Endothelial cell of umbilical vein (primary cell): ENCODE measurements at regions of chr7 and their contacts with region 1.

Region 1: DNA sequence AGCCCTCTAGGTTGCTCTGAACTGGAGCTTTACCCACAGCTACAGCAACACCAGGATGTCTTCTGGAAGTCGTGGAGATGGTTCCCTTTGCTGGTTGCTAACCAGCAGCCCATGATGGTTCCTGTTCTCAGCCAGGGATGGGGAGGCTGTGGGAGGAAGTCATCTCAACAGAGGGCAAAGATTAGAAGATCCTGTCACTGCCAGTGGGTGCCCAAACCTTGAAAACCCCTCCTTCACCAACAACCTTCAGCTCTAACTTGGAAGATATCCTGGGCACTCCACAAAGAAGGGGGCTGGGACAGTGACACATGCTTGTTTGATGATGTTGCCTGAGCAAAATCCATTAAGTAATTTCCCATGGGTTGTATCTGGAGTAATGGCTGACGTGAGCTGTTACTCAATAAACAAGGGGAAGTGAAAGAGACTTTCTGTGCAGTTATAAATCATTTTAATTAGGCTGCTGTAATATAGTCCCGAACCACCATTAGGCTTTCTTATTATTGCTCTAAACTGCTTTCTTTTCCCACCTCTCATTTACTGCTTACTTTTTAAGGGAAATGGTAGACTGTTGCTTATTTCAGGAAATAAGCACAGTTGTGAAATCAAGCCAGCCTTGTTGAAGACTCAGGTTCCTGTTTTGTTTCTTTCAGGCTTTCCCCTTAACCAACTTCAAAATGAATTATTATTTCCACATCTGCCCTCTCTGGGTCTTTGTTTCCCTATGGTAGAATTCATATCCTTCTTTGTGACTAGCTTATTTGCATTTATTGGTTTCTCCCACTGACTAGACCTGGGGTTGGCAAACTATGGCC is 124.8 kb downstream of the PPP1R17 start:
- DNase-seq: peak; percentile 56
- H3K4me3 ChIP-seq: no peak overlapping the region
- H3K27ac ChIP-seq: no peak overlapping the region
- H3K4me1 ChIP-seq: peaks cover 26% of the 10 kb centered on the region
- H3K27me3 ChIP-seq: no peaks in the 10 kb centered on the region
- CTCF ChIP-seq: no peak
- POLR2A ChIP-seq: no peak

Region 2: DNA sequence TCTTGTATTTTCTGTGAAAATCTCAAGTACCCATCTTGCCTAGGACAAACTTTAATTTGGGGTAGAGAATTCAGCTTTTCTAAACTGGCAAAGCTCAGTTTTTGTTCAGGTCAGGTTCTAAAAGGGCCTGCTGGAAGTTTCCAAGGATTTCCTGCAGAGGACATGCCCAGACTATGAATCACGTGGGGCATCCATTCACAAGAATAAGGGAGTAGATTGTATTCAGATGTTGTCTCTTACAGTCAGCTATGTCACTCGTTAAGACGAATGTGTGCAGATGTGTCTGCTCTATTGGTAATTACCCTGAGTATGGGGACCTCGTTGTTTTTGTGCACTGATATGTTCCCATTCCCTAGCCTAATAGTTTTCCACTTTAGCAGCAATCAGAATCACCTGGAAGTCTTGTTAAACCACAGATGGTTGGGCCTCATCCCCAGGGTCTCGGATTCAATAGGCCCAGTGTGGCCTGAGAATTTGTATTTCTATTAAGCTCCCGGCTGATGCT is 379.0 kb before region 1 on chr7:
- CTCF ChIA-PET with region 1: no interaction called
- POLR2A ChIA-PET with region 1: no interaction called
- dilution Hi-C with region 1: no loop called
- intact Hi-C with region 1: no loop called
- DNase-seq: peak; percentile 2
- H3K4me3 ChIP-seq: no peak overlapping the region
- H3K27ac ChIP-seq: no peak overlapping the region
- H3K4me1 ChIP-seq: no peaks in the 10 kb centered on the region
- H3K27me3 ChIP-seq: no peaks in the 10 kb centered on the region
- CTCF ChIP-seq: no peak
- POLR2A ChIP-seq: no peak

Region 3: DNA sequence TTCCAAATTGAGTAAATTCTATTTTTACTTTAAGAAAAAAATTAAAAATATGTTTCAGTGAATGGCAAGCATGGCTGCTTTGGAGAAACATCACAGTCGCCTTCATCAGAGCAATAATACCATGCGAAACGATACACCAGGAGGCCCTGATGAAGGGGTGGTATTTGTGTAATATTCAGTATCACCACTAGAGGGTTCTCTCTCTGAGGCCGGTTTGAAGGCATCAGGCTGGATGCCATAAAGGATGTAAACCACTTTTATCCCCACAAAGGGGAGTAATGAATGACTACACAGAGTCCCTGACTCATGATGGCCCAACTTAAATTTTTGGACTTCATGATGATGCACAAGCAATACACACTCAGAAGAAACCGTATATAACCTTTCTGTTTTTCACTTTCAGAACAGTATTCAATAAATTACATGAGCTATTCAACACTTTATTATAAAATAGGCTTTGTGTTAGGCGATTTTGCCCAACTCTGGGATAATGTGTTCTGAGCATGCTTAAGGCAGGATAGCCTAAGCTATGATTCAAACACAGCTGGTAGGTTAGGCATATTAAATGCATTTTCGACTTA is 29.4 kb before region 1 on chr7:
- CTCF ChIA-PET with region 1: interaction called, 12 read pairs
- POLR2A ChIA-PET with region 1: no interaction called
- dilution Hi-C with region 1: no loop called
- intact Hi-C with region 1: no loop called
- DNase-seq: peak; percentile 69
- H3K4me3 ChIP-seq: no peak overlapping the region
- H3K27ac ChIP-seq: no peak overlapping the region
- H3K4me1 ChIP-seq: no peaks in the 10 kb centered on the region
- H3K27me3 ChIP-seq: no peaks in the 10 kb centered on the region
- CTCF ChIP-seq: peak; percentile 68 to 70
- POLR2A ChIP-seq: no peak

Region 4: DNA sequence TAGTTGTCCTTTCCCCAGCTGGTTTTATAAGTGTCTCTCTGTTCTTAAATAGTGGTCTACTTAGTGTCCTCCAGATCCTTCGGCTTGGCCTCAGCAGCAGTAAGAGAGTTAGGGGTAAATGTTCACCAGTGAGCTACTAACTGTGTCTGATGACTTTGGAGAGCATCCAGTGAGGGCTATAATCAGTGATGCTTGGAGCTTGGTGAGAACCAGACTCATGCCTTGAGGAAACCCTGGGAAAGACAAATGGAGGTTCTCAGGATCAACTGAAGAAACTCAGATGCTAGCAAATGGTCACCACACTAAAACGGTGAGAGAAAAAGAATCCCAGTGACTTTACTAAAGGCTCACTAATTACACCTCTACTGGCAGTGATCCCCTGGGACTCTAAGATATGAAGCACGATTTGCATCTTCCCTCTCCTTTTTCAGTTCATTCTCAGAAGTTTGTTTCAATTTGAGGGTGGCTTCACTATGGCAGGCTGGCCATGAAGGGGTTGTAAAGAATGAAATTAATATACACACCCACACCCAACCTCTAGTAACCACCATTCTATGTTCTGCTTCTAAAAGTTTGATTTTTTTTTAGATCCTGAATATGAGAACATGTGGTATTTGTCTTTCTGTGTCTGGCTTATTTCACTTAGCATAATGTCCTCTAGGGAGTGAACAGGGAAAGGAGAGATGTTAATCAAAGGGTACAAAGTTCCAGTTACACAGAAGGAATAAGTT is 80.4 kb after region 1 on chr7:
- CTCF ChIA-PET with region 1: no interaction called
- POLR2A ChIA-PET with region 1: no interaction called
- dilution Hi-C with region 1: no loop called
- intact Hi-C with region 1: loop called (anchors 5 kb)
- DNase-seq: no peak
- H3K4me3 ChIP-seq: no peak overlapping the region
- H3K27ac ChIP-seq: no peak overlapping the region
- H3K4me1 ChIP-seq: peaks cover 11% of the 10 kb centered on the region
- H3K27me3 ChIP-seq: no peaks in the 10 kb centered on the region
- CTCF ChIP-seq: no peak
- POLR2A ChIP-seq: no peak

Region 5: DNA sequence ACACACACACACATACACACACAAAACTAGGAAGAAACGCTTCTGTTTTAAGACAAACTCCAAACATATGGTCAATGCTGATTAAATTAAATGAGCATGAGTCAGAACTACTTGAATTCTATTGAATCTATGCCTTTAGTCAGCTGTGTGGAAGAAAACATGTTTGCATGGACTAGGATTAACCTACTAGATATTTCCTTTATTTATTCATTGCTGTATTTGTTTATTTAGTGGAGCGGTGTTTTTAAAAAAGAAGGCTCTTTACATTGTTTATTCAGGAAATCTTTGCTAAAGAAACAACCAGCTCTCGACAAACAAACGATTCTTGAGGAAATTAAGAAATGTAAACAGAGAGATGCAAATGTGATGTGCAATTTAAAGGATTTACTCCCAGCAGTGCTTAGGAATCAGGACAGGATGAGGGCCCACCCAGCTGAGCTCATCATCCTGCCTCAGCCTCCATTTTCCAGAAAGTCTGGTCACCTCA is 175.1 kb after region 1 on chr7:
- CTCF ChIA-PET with region 1: interaction called, 11 read pairs
- POLR2A ChIA-PET with region 1: no interaction called
- dilution Hi-C with region 1: no loop called
- intact Hi-C with region 1: loop called (anchors 2 kb)
- DNase-seq: peak; percentile 85
- H3K4me3 ChIP-seq: no peak overlapping the region
- H3K27ac ChIP-seq: peak overlapping the region; percentile 83
- H3K4me1 ChIP-seq: peaks cover 34% of the 10 kb centered on the region
- H3K27me3 ChIP-seq: no peaks in the 10 kb centered on the region
- CTCF ChIP-seq: no peak
- POLR2A ChIP-seq: no peak

Region 6: DNA sequence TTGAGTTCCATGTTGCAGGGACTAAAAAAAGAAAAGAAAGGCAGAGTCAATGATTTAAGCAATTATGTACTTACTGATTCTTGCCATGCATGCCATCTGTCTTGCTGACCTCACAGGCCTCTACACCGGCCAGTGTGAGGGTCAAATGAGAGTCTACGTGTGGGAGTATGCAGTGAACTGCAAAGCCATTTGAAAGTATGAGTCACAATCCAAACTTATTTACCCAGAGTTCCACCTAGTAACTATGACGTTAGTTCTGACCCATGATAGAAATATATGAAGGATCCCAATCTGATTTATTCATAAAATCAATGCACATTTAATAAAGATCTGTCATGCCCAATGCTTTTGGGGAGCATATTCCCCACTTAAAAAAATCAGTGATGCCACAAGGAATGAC is 231.9 kb after region 1 on chr7:
- CTCF ChIA-PET with region 1: interaction called, 11 read pairs
- POLR2A ChIA-PET with region 1: no interaction called
- dilution Hi-C with region 1: no loop called
- intact Hi-C with region 1: loop called (anchors 2 kb)
- DNase-seq: no peak
- H3K4me3 ChIP-seq: no peak overlapping the region
- H3K27ac ChIP-seq: no peak overlapping the region
- H3K4me1 ChIP-seq: no peaks in the 10 kb centered on the region
- H3K27me3 ChIP-seq: peaks cover 0 to 2% of the 10 kb centered on the region in 2 experiments
- CTCF ChIP-seq: no peak
- POLR2A ChIP-seq: no peak

Region 7: DNA sequence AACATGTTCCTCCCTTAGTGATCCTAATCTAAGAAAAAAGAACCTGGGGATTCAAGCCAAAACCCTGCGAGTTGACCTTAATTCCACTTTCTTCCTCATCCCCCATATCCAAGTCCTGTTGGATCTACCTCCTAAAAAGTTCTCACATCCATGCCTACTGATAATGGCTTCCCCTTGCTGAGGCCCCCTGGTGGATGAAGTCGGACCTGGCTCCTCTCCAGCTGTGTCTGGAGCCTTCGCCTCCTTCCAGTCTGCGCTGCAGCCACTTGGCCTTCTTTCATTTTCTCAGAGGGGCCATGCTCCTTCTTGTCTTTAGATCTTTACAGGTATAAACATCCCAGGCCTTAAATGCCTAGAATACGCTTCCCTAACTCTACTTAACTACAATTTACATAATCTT is 250.3 kb after region 1 on chr7:
- CTCF ChIA-PET with region 1: interaction called, 67 read pairs
- POLR2A ChIA-PET with region 1: no interaction called
- dilution Hi-C with region 1: no loop called
- intact Hi-C with region 1: loop called (anchors 1 kb)
- DNase-seq: peak; percentile 48
- H3K4me3 ChIP-seq: no peak overlapping the region
- H3K27ac ChIP-seq: no peak overlapping the region
- H3K4me1 ChIP-seq: no peaks in the 10 kb centered on the region
- H3K27me3 ChIP-seq: peaks cover 0 to 8% of the 10 kb centered on the region in 2 experiments
- CTCF ChIP-seq: peak; percentile 64 to 66
- POLR2A ChIP-seq: no peak

Region 8: GRCh38 chr7:32204361-32205018 is 392.6 kb after region 1 on chr7:
- CTCF ChIA-PET with region 1: interaction called, 13 read pairs
- POLR2A ChIA-PET with region 1: no interaction called
- dilution Hi-C with region 1: no loop called
- intact Hi-C with region 1: loop called (anchors 1 kb)
- DNase-seq: peak; percentile 70
- H3K4me3 ChIP-seq: no peak overlapping the region
- H3K27ac ChIP-seq: no peak overlapping the region
- H3K4me1 ChIP-seq: no peaks in the 10 kb centered on the region
- H3K27me3 ChIP-seq: peaks cover 0 to 4% of the 10 kb centered on the region in 2 experiments
- CTCF ChIP-seq: peak; percentile 59 to 67
- POLR2A ChIP-seq: no peak